Head of caudate nucleus (tissue), 42 donors: ENCODE measurements at regions of chrX and their contacts with region 1.

Region 1: GRCh38 chrX:120769576-120770341 is 105.9 kb downstream of the CT47B1 start:
- DNase-seq: peak in 4 of 42 donors; percentile 7 to 39 (median 14)

Region 2: GRCh38 chrX:120499301-120500072 is 270.3 kb before region 1 on chrX:
- intact Hi-C with region 1: loop called (anchors 10 kb)
- DNase-seq: no peak

Region 3: DNA sequence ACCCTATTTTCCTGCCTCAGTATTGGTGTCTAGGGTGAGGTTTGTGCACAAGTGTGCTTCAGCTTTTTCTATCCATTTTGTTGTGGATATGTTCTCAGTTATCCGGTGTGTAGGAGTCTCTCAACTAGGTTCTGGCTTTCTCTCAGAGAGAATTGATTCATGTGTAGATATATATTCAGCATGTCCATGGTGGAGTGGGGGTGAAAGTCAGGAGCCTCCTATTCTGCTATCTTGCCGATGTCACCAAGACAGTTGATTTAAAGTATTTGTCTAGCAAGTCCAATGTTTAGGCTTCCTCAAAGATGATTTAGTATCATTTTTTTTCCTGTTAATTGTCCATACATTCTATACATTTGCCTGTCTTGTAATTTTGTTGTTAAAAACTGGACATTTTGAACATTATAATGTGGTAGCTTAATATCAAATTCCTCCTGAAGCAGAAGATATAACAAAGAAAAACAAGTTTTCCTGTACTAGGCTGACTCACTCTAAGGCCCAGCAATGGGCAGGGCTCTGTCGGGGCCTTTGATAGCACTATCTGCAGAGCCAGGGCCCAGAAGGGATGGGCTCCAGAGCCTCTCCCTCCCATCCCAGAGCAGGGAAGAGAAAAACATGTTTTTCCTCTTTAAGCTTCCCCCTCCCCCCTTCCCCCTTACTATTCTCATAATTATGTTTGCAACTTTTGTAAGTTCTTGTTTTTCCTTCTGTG is 315.3 kb after region 1 on chrX:
- intact Hi-C with region 1: no loop called
- DNase-seq: no peak